Natural killer cell (primary cell): ENCODE measurements at regions of chr5 and their contacts with region 1.

Region 1: GRCh38 chr5:99320436-99320835 is 391.6 kb upstream of the CHD1 start:
- DNase-seq: peak in 1 of 2 donors; percentile 7
- ATAC-seq: no peak
- H3K4me3 ChIP-seq: no peak overlapping the region
- H3K4me3 Mint-ChIP-seq: no peak overlapping the region
- H3K27ac ChIP-seq: no peak overlapping the region
- H3K27ac Mint-ChIP-seq: no peak overlapping the region
- H3K4me1 ChIP-seq: no peaks in the 10 kb centered on the region
- H3K4me1 Mint-ChIP-seq: peaks cover 0 to 5% of the 10 kb centered on the region in 2 donors
- H3K27me3 ChIP-seq: no peaks in the 10 kb centered on the region
- H3K27me3 Mint-ChIP-seq: no peaks in the 10 kb centered on the region
- CTCF ChIP-seq: no peak

Region 2: GRCh38 chr5:99104538-99105132 is 215.8 kb before region 1 on chr5:
- intact Hi-C with region 1: loop called (anchors 5 kb)
- DNase-seq: peak in 1 of 2 donors; percentile 56
- ATAC-seq: peak in 1 of 3 donors; percentile 42
- H3K4me3 ChIP-seq: no peak overlapping the region
- H3K4me3 Mint-ChIP-seq: no peak overlapping the region
- H3K27ac ChIP-seq: no peak overlapping the region
- H3K27ac Mint-ChIP-seq: no peak overlapping the region
- H3K4me1 ChIP-seq: no peaks in the 10 kb centered on the region
- H3K4me1 Mint-ChIP-seq: no peaks in the 10 kb centered on the region
- H3K27me3 ChIP-seq: no peaks in the 10 kb centered on the region
- H3K27me3 Mint-ChIP-seq: peaks cover 0 to 9% of the 10 kb centered on the region in 2 donors
- CTCF ChIP-seq: peak; percentile 80